Right cardiac atrium (tissue), 5 donors: ENCODE measurements at regions of chr9 and their contacts with region 1.

Region 1: DNA sequence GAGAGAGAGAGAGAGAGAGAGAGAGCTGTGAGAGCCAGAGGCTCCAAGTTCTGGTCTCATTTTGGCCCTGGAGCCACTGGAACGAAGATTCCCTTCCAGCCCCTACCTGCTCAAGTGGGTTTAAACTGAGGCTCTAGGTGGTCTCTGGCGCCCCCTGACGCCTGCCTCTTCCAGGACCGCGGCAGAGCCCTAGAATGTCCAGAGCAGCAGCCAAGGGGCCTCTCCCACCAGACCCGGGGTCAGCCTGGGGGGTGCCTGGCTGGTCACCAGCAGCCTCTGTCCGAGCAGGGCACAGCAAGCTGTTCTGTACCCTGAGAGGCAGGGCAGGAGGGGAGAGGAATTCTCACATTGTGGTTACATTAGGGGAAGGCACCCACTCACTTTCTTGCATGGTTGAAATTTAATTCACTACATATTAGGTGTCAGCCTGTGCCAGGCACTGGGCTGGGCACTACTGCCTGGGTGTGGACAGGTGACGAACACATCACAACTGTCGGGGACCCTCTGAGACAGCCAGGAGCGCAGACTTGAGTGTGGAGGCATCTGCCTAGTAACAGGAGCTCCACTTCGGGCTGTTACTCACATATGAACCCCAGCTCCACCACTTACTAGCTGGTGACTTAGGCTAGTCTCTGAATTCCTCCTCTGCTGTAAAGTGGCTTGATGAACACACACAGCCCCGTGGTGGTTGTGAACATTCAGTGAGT is 44.5 kb downstream of the AMBP start:
- DNase-seq: peak; percentile 43 to 81 (median 79)
- ATAC-seq: peak; percentile 57 to 63
- H3K4me3 ChIP-seq: no peak overlapping the region
- H3K27ac ChIP-seq: no peak overlapping the region
- H3K4me1 ChIP-seq: no peaks in the 10 kb centered on the region
- H3K27me3 ChIP-seq: no peaks in the 10 kb centered on the region

Region 2: DNA sequence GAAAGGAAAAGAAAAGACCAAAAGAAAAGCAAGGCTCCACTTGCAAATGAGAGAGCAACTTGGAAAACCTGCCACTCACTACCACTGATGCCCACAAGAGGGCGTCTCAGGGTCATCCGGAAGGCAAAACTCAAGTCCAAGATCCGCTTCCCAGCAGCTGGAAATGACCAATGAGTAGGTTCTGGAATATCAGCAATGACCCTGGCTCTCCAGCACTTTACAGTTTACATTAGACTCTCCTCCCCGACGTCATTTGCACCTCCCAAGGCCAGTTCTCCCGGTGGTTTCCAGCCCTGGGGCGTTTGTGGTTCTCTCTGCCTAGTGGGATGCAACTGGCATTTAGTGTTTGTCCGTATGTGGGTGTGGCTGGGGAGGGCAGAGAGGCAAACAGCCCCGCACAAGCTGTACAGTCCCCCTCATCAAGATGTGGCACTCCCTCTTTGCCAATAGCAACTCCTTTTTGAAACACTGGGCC is 351.2 kb before region 1 on chr9:
- intact Hi-C with region 1: loop called in 2 of 4 experiments (anchors 10 kb)
- DNase-seq: peak; percentile 72 to 88 (median 76)
- ATAC-seq: peak; percentile 53 to 69
- H3K4me3 ChIP-seq: no peak overlapping the region
- H3K27ac ChIP-seq: no peak overlapping the region
- H3K4me1 ChIP-seq: no peaks in the 10 kb centered on the region
- H3K27me3 ChIP-seq: no peaks in the 10 kb centered on the region

Region 3: DNA sequence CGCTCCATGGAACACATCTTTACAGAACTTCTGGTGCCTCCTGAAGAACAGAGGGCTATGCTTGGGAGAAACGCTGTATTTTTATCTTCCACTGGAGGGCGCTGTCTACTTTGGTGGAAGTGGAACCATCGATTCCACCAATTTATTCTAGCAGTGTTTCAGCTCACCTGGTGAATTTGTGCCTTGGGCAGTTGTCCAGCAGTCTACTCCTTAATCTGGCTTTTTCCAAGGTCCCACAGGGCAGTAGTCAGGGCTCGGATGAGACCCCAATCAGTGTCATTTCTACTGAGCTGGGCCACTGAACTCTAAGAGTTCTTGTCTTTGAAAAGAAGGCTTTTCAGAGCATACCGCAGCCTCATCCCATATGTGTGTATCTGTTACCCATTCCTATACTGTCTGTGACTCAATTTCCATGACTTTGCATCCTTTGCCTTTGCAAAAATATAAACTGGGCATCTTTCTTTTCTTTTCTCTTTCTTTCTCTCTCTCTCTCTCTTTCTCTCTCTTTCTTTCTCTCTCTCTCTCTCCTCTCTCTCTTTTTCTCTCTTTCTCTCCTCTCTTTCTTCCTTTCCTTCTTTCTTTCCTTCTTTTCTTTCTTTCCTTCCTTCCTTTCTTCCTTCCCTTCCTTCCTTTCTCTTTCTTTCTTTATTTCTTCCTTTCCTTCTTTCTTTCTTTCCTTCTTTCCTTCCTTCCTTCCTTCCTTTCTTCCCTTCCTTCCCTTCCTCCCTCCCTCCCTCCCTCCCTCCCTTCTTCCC is 295.9 kb before region 1 on chr9:
- intact Hi-C with region 1: loop called in 1 of 4 experiments (anchors 10 kb)
- DNase-seq: no peak
- ATAC-seq: no peak
- H3K4me3 ChIP-seq: no peak overlapping the region
- H3K27ac ChIP-seq: no peak overlapping the region
- H3K4me1 ChIP-seq: no peaks in the 10 kb centered on the region
- H3K27me3 ChIP-seq: no peaks in the 10 kb centered on the region

Region 4: DNA sequence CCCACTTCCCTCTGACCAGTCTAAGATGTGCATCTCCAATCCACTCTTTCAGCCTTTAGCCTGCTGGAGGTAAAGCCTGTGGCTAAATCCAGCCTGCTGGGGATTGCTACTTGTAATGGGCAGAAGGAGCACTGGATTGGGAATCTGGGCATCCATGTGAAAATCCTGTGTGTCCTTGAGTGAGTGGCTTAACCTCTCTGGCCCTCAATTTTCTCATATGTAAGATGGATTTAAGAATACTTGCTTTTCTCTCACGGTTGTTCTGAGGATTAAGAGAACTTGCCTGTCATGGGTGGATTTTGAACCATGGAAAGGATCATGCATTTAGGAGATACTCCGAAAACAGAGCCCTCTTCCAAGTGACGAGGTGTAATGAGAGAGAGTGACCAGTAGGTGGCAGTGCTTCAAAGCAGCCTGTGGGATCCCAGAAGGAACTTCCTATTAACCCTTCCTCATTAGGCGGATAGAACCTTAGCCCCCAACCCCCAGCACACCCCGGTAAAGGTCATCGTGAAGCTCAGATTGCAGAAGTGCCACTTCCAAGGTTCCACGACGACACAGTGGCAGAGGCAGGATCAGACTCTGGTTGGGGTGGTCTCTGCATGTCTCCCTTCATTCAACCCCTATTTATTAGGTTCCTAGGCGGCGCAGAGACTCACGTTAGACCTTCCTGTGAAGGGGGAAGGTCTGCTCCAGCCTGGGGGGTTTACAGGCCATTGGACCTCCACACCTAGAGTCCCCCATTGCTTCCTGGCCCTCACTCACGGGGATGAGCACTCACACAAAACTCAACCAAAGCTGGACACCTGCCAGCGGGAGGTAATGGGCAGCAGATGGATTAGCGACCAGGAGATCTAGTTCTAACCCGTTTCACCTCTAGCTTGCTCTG is 226.1 kb before region 1 on chr9:
- intact Hi-C with region 1: loop called (anchors 2 to 5 kb)
- DNase-seq: peak in 2 of 3 donors; percentile 38 to 67
- ATAC-seq: peak; percentile 74 to 76
- H3K4me3 ChIP-seq: no peak overlapping the region
- H3K27ac ChIP-seq: no peak overlapping the region
- H3K4me1 ChIP-seq: no peaks in the 10 kb centered on the region
- H3K27me3 ChIP-seq: no peaks in the 10 kb centered on the region

Region 5: DNA sequence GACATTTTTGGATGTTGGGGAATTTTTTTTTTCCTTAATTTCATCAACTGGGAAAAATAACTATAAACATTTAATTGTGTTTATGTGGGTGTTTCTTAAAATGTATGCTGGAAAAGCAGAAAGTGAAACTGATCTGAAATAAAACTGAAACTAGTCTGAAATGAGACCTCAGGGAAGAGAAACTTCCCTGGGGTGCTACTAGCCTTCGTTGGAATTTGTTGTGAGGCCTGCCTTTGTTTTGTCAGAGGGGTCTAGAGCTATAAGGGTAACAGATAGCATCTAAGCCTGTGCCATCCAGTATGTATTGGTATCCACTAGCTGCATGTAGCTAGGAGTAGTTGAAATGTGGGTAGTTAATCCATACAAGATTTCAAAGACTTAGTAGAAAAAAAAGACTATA is 147.1 kb before region 1 on chr9:
- intact Hi-C with region 1: loop called in 1 of 4 experiments (anchors 10 kb)
- DNase-seq: no peak
- ATAC-seq: peak in 1 of 2 donors; percentile 39
- H3K4me3 ChIP-seq: peak overlapping the region; percentile 31
- H3K27ac ChIP-seq: no peak overlapping the region
- H3K4me1 ChIP-seq: peaks cover 14% of the 10 kb centered on the region
- H3K27me3 ChIP-seq: no peaks in the 10 kb centered on the region